Mucosa of descending colon (tissue), 3 donors: ENCODE measurements at regions of chr3 and their contacts with region 1.

Region 1: GRCh38 chr3:42080452-42080891 is 10.7 kb upstream of the TRAK1 start:
- DNase-seq: peak in 1 of 3 donors; percentile 64
- ATAC-seq: peak; percentile 91
- H3K4me3 ChIP-seq: no peak overlapping the region
- H3K4me1 ChIP-seq: peaks cover 30% of the 10 kb centered on the region
- CTCF ChIP-seq: no peak

Region 2: DNA sequence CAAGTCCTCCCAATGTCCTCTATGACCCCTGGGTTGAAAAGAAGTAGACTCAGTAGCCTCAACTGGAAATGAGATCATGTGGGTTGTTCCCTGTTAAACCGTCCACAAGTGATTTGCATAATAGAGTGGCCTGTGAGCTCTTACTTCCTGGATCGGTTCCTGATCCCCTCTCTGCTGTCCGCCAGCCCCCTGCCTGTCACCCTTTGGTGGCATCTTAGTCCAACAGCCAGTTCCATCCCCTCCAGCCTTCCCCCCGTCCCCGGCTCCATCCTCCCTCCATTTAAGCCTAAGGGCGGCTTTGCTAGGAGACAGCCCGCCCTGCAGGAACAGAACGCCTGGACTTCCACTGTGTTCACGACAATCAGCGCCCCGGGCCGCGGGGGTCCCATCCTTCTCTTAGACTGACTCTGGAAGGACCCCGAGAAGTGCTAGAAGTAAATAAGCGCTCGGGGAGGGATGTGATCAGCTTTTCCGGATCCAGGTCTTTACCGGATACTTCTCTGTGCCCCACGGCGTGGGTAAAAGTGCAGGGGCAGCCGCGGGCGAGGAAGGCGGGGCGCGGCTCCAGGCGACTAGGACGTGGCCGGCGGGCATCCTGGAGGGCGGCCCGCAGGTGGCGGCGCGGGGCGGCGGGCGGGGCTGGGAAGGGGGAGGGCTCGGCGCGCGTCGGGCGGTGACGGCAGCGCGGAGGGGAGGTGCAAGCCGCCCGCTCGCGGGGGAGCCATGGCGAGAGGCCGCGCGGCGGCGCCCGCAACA is 67.4 kb before region 1 on chr3:
- intact Hi-C with region 1: loop called (anchors 10 kb)
- DNase-seq: peak; percentile 82 to 91 (median 91)
- ATAC-seq: peak; percentile 90
- H3K4me3 ChIP-seq: peak overlapping the region; percentile 86
- H3K4me1 ChIP-seq: peaks cover 22% of the 10 kb centered on the region
- CTCF ChIP-seq: no peak

Region 3: GRCh38 chr3:42148982-42149432 is 68.5 kb after region 1 on chr3:
- intact Hi-C with region 1: no loop called
- DNase-seq: peak in 1 of 3 donors; percentile 44
- ATAC-seq: peak; percentile 32
- H3K4me3 ChIP-seq: no peak overlapping the region
- H3K4me1 ChIP-seq: peaks cover 28% of the 10 kb centered on the region
- CTCF ChIP-seq: no peak